ENCODE measurements at regions of chr2 and their contacts with region 1.

Region 1: DNA sequence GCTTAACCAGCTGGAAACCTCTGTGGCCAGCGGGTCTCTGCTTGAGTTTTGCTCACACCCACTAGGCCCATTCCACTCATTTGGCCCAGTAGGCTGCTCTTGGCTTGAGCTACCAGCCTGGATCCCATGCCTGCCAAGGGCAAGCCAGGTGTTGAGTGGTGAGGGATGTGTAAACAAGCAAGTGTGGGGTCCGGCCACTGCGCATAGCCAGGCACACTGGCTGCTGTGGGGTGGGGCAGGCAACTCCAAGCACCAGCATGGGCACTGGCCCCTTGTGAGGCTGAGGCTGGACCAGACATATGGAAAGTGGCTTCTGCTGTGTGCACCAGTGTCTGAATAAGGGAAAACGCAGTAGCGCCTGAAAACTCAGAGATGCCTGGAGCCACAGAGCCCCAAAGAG is 732.7 kb downstream of the NR4A2 start:
- DNase-seq: peak in 3 of 10 donors; percentile 55 to 68 (median 60)

Region 2: GRCh38 chr2:155633887-155634570 is 34.2 kb after region 1 on chr2:
- intact Hi-C with region 1: loop called (anchors 2 kb)
- DNase-seq: no peak

Region 3: DNA sequence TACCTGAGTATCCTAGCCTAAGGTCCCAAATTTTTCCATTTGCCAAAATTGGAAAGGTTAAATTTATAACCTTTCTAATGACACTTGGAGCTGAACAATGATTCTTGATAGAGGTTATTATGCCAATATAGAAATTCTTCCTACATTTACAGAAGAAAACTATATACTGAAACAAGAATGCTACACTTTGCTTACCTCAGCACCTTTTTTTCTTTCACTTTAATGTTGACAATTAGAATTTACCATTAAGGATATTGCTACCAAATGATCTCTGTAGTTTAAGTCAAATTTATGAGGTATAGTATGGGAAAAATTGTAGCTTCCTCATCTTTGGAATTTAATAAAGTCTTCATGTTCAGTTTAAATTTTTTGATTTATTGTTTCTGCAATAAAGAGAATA is 155.6 kb after region 1 on chr2:
- intact Hi-C with region 1: no loop called
- DNase-seq: no peak